Posterior cingulate gyrus (tissue), 11 donors: ENCODE measurements at regions of chr1 and their contacts with region 1.

Region 1: GRCh38 chr1:157948312-157949073 is 45.0 kb upstream of the KIRREL1 start:
- DNase-seq: peak in 4 of 10 donors; percentile 11 to 80 (median 22)

Region 2: GRCh38 chr1:157580179-157580827 is 368.2 kb before region 1 on chr1:
- intact Hi-C with region 1: loop called (anchors 1 kb)
- DNase-seq: no peak

Region 3: DNA sequence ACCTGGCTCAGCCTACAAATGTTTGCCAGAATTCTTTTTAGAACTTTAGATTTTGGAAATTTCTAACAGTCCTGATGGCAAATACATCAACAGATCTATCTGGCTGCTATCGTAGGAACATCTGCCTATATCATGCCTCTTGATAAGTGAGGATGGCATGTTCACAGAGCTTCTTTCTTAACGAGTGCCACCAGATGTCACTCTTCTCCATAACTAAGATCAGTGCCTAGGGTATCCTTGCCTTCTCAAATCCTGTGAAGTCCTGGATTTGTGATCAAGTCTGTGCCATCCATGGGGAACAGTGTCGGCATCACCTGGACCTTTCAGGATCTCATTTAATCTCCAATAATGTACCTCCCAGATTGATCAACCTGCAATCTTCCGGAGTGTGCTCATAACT is 70.4 kb before region 1 on chr1:
- intact Hi-C with region 1: loop called (anchors 1 kb)
- DNase-seq: no peak

Region 4: DNA sequence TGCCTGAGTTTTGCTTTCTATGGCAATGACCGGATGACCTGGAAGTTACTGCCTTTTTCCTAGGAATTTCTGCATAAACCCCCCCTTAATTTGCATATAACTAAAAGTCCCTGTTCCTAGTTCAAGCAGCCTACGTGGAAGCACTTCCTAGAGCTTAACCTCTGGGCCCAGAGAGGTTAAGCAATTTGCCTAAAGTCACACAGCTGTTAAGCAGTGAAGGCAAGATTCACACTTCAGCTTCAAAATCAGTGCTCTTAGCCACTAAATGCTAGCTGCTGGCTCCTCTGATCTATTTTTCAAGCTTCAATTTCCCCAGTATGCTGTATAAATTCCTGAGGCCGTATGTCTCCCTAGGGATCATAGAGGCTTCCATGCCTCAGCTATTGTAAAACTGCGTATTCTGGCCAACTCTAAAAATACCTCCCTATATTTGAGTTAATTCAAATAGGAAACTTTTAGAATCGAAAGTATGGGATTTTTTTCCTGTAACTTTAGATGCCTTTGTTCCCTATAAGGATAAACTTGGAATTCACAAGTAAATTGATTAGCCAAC is 53.8 kb before region 1 on chr1:
- intact Hi-C with region 1: no loop called
- DNase-seq: no peak